ENCODE measurements at regions of chr18 and their contacts with region 1.

Region 1: DNA sequence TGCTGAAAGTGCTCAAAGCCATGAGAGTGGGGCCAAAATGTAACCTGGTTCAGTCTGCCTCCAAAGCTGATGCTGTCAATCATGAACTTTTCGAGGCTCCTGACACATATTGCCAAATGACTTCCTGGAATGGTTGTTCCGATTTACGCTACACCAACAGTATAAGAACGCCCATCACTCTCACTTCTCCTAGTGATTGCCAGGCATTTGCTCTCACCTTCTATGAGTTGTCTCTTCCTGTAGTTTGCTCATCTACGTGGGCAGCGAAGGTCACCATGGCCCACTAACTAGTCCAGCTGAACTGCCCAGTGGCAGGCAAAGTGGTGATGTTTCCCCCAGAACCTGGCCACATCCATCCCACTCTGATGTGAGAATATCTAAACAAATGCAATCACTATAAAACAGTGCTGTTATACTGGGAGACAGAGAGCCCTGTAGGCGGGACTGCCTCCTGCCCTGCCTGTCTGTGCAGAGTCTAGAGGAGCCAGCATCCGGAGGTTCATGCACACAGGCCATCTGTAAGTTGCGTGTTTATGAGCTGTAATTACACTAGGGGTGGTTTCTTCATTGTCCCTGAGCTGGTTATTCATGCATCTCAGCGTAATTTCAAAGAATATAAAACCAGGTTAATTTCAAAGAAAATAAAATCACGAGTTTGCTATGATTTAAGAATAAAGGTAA is 8.8 kb upstream of the CABLES1 start:
- DNase-seq: no peak
- H3K4me3 ChIP-seq: no peak overlapping the region
- H3K27ac ChIP-seq: no peak overlapping the region
- H3K4me1 ChIP-seq: no peaks in the 10 kb centered on the region
- H3K27me3 ChIP-seq: peaks cover 41% of the 10 kb centered on the region
- CTCF ChIP-seq: no peak

Region 2: GRCh38 chr18:22585821-22586220 is 540.7 kb before region 1 on chr18:
- intact Hi-C with region 1: no loop called
- DNase-seq: no peak
- H3K4me3 ChIP-seq: no peak overlapping the region
- H3K27ac ChIP-seq: no peak overlapping the region
- H3K4me1 ChIP-seq: no peaks in the 10 kb centered on the region
- H3K27me3 ChIP-seq: no peaks in the 10 kb centered on the region
- CTCF ChIP-seq: no peak

Region 3: GRCh38 chr18:23049698-23050373 is 76.7 kb before region 1 on chr18:
- intact Hi-C with region 1: loop called (anchors 10 kb)
- DNase-seq: no peak
- H3K4me3 ChIP-seq: no peak overlapping the region
- H3K27ac ChIP-seq: no peak overlapping the region
- H3K4me1 ChIP-seq: no peaks in the 10 kb centered on the region
- H3K27me3 ChIP-seq: peaks cover 62% of the 10 kb centered on the region
- CTCF ChIP-seq: no peak

Region 4: GRCh38 chr18:23422672-23423418 is 296.3 kb after region 1 on chr18:
- intact Hi-C with region 1: no loop called
- DNase-seq: peak; percentile 36
- H3K4me3 ChIP-seq: no peak overlapping the region
- H3K27ac ChIP-seq: no peak overlapping the region
- H3K4me1 ChIP-seq: peaks cover 6% of the 10 kb centered on the region
- H3K27me3 ChIP-seq: no peaks in the 10 kb centered on the region
- CTCF ChIP-seq: no peak